Heart right ventricle (tissue), 16 donors: ENCODE measurements at regions of chr22 and their contacts with region 1.

Region 1: DNA sequence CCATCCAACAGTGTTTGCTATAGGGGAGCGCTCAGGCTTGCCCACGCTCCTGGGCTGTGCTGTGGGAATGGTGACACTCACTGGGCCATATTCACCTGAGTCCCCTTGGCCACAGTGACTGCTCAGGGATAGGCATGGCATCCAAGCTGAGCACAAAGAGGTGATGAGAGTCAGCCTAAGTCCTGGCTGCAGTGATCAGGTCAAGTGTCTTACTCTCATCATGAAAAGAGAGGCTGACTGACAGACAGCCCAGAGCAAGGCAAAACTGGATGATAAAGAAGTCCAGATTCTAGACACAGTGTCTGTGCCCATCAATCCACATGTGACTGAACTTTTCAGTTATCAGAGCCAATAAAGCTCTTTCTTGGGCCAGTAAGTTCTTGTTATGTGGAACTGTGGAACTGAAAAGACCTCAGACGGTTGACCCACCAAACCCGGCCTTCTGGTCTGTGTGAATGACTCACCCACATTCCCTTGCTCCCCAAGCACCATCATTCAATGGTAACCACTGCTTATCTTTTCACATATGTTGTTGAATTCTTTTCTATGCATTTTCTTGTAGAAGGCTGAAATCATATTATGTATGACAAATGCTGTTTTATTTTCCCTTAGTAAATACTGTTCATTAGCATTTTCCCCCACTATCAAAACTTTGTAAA is 43.2 kb upstream of the YPEL1 start:
- DNase-seq: no peak
- ATAC-seq: no peak
- H3K4me3 ChIP-seq: no peak overlapping the region
- H3K27ac ChIP-seq: no peak overlapping the region
- H3K4me1 ChIP-seq: peaks cover 0 to 29% (median 2%) of the 10 kb centered on the region in 9 donors
- H3K27me3 ChIP-seq: no peaks in the 10 kb centered on the region
- CTCF ChIP-seq: no peak

Region 2: DNA sequence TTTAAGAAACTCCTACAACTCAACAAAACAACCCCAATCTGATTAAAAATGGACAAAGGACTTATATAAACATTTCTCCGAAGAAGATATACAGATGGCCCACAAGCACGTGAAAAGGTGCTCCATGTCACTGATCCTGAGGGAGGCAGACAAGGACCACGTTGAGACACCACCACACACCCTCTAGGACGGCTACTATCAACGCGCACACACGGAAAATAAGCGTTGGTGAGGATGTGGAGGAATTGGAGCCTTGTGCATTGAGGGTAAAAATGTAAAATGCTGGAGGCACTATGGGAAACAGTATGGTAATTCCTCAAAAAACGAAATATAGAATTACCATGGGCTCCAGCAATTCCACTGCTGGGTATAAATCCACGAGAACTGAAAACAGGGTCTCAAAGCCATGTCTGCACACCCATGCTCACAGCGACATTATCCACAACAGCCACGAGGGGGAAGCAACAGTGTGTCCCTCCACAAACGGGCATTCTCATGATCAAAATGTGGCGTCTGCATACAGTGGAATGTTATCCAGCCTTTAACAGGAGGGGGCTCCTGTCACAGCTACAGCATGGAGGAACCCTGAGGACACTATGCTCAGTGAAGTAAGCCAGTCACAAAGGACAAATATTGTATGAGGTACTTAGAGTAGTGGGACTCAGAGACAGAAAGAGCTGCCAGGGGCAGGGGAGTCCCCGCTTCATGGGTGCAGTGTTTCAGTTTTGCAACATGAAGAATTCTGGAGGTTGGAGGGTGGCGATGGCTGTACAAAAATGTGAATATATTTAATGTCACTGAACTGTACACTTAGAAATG is 65.7 kb before region 1 on chr22:
- intact Hi-C with region 1: loop called in 1 of 10 experiments (anchors 10 kb)
- DNase-seq: peak; percentile 44 to 70
- ATAC-seq: peak; percentile 86 to 96 (median 92)
- H3K4me3 ChIP-seq: peak overlapping the region in 5 of 10 donors; percentile 4 to 28 (median 13)
- H3K27ac ChIP-seq: peak overlapping the region in 2 of 10 donors; percentile 28 to 41
- H3K4me1 ChIP-seq: peaks cover 0 to 19% (median 9%) of the 10 kb centered on the region in 9 donors
- H3K27me3 ChIP-seq: no peaks in the 10 kb centered on the region
- CTCF ChIP-seq: peak; percentile 46 to 89 (median 77)

Region 3: GRCh38 chr22:21726650-21727049 is 52.2 kb before region 1 on chr22:
- intact Hi-C with region 1: loop called in 1 of 10 experiments (anchors 5 kb)
- DNase-seq: no peak
- ATAC-seq: peak in 1 of 8 donors; percentile 30
- H3K4me3 ChIP-seq: no peak overlapping the region
- H3K27ac ChIP-seq: no peak overlapping the region
- H3K4me1 ChIP-seq: no peaks in the 10 kb centered on the region
- H3K27me3 ChIP-seq: no peaks in the 10 kb centered on the region
- CTCF ChIP-seq: no peak

Region 4: DNA sequence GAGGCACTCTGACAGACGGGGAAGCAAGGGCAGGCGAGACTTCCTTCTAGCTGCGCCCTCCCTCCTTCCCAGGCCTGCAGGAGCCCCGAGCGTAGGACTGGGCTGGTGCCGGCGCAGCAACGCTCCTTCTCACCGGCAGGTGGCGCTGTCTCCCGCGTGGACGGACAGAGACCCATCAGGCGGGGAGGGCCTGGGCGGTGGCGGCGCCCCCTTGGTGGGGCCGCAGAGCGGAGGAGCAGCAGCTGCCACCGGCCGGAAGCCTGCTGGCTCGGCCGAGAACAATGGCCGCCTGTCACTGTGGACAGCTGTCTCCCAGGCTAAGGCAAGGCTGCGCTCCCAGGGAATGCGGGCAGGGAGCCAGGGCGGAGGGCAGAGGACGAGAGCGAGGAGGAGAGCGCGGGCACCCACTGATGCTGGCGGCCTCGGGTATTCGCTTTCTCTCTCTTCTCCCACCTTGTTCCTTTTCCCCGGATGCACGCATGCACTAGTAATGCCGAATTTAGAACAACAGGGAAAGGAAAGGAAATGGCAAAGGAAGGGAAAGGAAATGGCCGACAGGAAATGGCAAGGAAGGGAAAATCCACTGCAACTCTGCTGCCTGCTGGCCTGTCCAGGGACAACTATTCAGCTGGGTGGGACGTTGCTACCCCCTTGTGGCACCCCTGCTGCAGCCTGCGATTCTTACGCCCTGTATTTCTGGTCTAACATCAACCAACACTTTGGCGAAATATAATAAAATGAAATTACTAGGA is 159.4 kb after region 1 on chr22:
- intact Hi-C with region 1: loop called in 6 of 10 experiments (anchors 1 to 10 kb)
- DNase-seq: peak; percentile 93 to 97
- ATAC-seq: peak; percentile 85 to 96 (median 90)
- H3K4me3 ChIP-seq: peak overlapping the region; percentile 22 to 67 (median 59)
- H3K27ac ChIP-seq: peak overlapping the region; percentile 90 to 98 (median 96)
- H3K4me1 ChIP-seq: peaks cover 35 to 85% (median 78%) of the 10 kb centered on the region in 9 donors
- H3K27me3 ChIP-seq: no peaks in the 10 kb centered on the region
- CTCF ChIP-seq: peak; percentile 90 to 99 (median 97)